ENCODE measurements at regions of chr18 and their contacts with region 1.

Region 1: DNA sequence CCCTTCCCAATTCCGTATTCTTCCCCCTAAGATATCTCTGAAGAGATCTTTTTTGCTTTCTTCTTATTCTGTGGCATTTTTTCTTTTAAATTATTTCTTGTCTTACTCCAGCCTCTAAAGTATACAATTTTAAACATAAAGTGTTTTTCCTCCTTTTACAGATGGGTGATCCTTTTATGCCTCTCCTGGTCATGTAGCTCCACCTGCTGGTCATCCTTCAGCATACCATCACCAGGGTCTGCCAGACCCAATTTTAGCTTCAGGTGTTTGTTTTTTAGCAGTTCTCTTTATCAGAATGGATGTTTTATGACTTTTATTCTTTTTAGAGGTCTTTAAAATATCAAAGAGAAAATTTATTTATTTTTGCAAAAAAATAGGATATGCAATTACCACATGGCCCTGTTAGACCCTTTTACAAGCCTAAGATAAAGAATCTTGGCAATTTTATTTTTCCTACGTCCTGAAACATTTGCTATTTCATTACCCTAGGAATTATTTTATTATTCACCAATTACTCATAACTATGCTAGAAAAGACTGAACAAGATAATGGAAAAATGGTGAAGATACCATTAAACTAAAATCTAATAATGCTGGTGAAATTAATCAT is 55.5 kb downstream of the PIGN start:
- DNase-seq: peak; percentile 64
- ATAC-seq: peak; percentile 45
- H3K4me3 Mint-ChIP-seq: no peak overlapping the region
- H3K27ac Mint-ChIP-seq: no peak overlapping the region
- H3K4me1 Mint-ChIP-seq: no peaks in the 10 kb centered on the region
- H3K27me3 Mint-ChIP-seq: no peaks in the 10 kb centered on the region
- CTCF ChIP-seq: peak; percentile 97

Region 2: DNA sequence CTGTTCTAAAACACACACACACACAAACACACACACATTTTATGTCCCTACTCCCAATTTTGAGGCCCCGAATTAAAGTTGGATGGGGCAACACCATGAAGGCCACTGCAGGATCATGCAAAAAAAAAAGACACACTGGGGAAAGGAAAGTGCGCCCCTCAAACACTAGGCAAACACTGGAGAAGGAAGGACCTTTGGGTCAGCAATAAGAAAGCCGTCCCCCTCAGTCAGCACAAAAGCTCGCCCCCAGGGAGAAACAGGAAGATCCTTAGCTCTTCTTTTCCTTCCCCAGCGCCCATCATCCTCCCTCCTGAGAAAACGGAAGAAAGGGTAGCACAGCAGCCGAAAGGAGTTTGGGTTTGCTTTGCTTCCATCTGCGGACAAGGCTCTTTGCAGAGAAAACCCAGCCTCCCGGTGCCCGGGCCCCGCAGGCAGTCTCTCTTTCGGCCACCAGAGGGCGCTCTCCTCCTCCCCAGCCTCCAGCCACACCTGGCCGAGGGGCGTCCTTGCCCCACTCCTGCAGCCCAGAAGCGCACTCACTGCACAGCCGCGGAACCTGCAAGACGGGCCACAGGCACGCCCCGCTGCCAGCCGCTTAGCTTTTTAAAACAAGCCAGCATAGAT is 549.7 kb before region 1 on chr18:
- CTCF ChIA-PET with region 1: interaction called, 19 read pairs
- POLR2A ChIA-PET with region 1: no interaction called
- intact Hi-C with region 1: loop called (anchors 5 kb)
- DNase-seq: peak; percentile 73
- ATAC-seq: peak; percentile 77
- H3K4me3 Mint-ChIP-seq: no peak overlapping the region
- H3K27ac Mint-ChIP-seq: no peak overlapping the region
- H3K4me1 Mint-ChIP-seq: peaks cover 8% of the 10 kb centered on the region
- H3K27me3 Mint-ChIP-seq: peaks cover 35% of the 10 kb centered on the region
- CTCF ChIP-seq: peak; percentile 92

Region 3: GRCh38 chr18:61635901-61636528 is 495.4 kb before region 1 on chr18:
- CTCF ChIA-PET with region 1: interaction called, 24 read pairs
- POLR2A ChIA-PET with region 1: no interaction called
- intact Hi-C with region 1: loop called (anchors 5 kb)
- DNase-seq: peak; percentile 58
- ATAC-seq: peak; percentile 70
- H3K4me3 Mint-ChIP-seq: no peak overlapping the region
- H3K27ac Mint-ChIP-seq: no peak overlapping the region
- H3K4me1 Mint-ChIP-seq: no peaks in the 10 kb centered on the region
- H3K27me3 Mint-ChIP-seq: peaks cover 25% of the 10 kb centered on the region
- CTCF ChIP-seq: peak; percentile 80

Region 4: DNA sequence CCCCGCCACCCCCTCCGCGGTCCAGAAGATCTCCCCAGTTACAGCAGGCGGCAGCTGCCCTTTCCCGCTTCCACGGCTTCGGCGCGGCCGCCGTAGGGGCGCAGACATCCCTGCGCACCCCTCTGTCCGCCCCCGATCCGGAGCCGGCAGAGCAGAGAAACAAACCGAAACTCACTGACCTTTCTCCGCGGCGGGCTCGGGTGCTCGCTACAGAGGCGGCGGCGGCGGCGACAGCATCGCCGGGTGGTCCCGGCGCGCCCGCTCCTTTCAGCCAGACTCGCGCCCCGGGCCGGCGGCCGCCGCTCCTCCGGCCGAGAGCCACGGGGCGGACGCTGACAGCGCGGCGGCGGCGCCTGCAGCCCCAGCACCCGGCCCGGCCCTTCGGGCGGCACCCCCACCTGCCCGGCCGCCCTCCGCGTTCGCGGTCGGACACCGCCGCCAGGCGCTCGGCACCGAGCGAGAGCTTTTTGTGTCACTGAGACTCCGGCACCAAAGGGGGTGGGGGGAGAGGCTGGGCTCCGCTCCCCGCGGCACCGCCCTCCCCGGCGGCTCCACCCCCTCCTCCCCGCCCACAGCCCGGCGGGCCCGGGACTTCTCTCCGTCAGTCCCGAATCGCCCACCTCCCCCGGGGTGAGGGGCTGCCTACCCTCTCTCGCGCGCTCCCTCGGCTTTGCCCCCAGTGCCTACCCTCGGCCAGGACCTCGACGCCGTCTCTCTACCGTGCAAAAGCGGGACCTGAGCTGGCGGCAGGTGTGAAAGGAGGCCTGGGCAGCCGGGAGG is 237.2 kb before region 1 on chr18:
- CTCF ChIA-PET with region 1: interaction called, 5 read pairs
- POLR2A ChIA-PET with region 1: no interaction called
- intact Hi-C with region 1: loop called (anchors 10 kb)
- DNase-seq: peak; percentile 70
- ATAC-seq: peak; percentile 84
- H3K4me3 Mint-ChIP-seq: peak overlapping the region; percentile 76
- H3K27ac Mint-ChIP-seq: no peak overlapping the region
- H3K4me1 Mint-ChIP-seq: peaks cover 14% of the 10 kb centered on the region
- H3K27me3 Mint-ChIP-seq: peaks cover 44% of the 10 kb centered on the region
- CTCF ChIP-seq: no peak

Region 5: DNA sequence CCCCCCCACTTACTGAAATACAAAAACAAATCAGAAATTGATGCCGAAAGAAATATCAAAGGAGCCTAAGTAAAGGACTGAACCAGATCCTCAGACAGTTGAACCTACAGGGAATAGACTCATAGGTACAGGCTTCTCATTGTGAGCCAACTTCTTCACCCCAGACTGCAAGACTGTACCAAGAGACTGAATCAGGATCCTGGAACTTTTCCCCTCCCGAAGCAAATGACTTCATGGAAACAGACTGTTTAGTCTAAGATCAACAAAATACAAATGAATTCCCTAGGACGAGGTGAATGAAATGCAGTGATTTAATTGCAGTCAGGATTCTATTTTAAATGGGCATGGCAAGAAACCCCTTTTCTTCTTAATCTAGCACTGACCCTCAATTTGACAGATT is 185.0 kb before region 1 on chr18:
- CTCF ChIA-PET with region 1: no interaction called
- POLR2A ChIA-PET with region 1: no interaction called
- intact Hi-C with region 1: no loop called
- DNase-seq: no peak
- ATAC-seq: no peak
- H3K4me3 Mint-ChIP-seq: no peak overlapping the region
- H3K27ac Mint-ChIP-seq: no peak overlapping the region
- H3K4me1 Mint-ChIP-seq: peaks cover 22% of the 10 kb centered on the region
- H3K27me3 Mint-ChIP-seq: peaks cover 27% of the 10 kb centered on the region
- CTCF ChIP-seq: no peak

Region 6: GRCh38 chr18:62054929-62055498 is 76.4 kb before region 1 on chr18:
- CTCF ChIA-PET with region 1: no interaction called
- POLR2A ChIA-PET with region 1: no interaction called
- intact Hi-C with region 1: no loop called
- DNase-seq: no peak
- ATAC-seq: no peak
- H3K4me3 Mint-ChIP-seq: no peak overlapping the region
- H3K27ac Mint-ChIP-seq: no peak overlapping the region
- H3K4me1 Mint-ChIP-seq: no peaks in the 10 kb centered on the region
- H3K27me3 Mint-ChIP-seq: no peaks in the 10 kb centered on the region
- CTCF ChIP-seq: no peak

Region 7: DNA sequence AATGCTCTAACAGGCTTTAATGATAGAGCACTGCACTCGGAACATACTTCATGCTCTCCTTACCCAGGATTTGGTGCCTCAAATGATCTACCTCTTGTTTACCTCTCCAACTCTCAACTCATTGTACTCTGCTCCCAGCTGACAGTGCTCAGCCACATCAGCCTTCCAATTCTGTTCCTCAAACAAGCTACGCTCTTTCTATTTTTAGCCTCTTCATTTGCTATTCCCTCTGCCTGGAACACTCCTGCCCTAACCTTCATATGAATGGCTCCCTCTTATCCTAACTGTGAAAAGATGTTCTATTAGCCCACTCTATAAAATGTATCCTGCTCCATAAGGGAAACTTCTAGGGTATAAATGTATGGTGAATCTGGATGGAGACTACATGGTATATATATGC is 12.9 kb after region 1 on chr18:
- CTCF ChIA-PET with region 1: interaction called, 15 read pairs
- POLR2A ChIA-PET with region 1: no interaction called
- intact Hi-C with region 1: no loop called
- DNase-seq: no peak
- ATAC-seq: no peak
- H3K4me3 Mint-ChIP-seq: no peak overlapping the region
- H3K27ac Mint-ChIP-seq: no peak overlapping the region
- H3K4me1 Mint-ChIP-seq: no peaks in the 10 kb centered on the region
- H3K27me3 Mint-ChIP-seq: no peaks in the 10 kb centered on the region
- CTCF ChIP-seq: no peak

Region 8: GRCh38 chr18:62183578-62184195 is 52.3 kb after region 1 on chr18:
- CTCF ChIA-PET with region 1: no interaction called
- POLR2A ChIA-PET with region 1: no interaction called
- intact Hi-C with region 1: no loop called
- DNase-seq: peak; percentile 63
- ATAC-seq: no peak
- H3K4me3 Mint-ChIP-seq: no peak overlapping the region
- H3K27ac Mint-ChIP-seq: no peak overlapping the region
- H3K4me1 Mint-ChIP-seq: peaks cover 19% of the 10 kb centered on the region
- H3K27me3 Mint-ChIP-seq: no peaks in the 10 kb centered on the region
- CTCF ChIP-seq: peak; percentile 99

Region 9: DNA sequence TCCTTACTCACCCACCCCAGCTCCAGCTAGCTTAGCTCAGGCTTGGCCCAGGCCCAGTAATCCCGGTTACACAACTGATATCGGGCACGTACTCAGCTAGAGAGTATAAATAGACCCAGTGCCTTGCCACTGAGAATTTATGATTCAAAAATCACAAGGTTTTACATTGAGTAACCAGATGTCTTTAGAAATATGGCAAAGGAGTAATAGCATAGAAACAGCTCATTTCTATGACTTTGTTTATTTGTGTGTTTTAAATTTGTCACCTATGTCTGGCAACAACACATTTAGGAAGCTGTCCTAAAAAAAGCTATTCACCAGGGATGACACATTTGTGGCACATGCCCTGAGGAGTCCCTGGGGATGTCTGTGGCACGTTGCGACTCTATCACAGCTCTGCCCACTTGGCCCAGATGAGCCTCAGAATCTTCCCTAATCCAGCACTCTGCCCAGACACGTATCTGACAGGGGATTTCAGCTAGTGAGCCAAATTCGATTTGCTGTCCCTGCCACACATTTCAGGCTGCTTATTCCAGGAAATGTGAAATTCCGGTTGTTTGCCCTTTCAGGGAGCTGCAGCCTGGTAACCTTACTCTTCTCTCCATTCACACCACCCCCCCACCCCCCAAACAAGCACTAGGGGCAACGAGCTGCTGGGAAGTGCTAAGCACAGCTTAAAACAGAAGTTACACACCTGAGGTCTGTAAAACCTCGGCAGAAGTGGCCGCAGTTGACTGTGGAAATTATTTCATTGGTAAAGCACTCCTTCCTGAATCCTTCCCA is 306.0 kb after region 1 on chr18:
- CTCF ChIA-PET with region 1: no interaction called
- POLR2A ChIA-PET with region 1: no interaction called
- intact Hi-C with region 1: no loop called
- DNase-seq: no peak
- ATAC-seq: no peak
- H3K4me3 Mint-ChIP-seq: no peak overlapping the region
- H3K27ac Mint-ChIP-seq: no peak overlapping the region
- H3K4me1 Mint-ChIP-seq: no peaks in the 10 kb centered on the region
- H3K27me3 Mint-ChIP-seq: peaks cover 3% of the 10 kb centered on the region
- CTCF ChIP-seq: no peak